ENCODE measurements at regions of chr1 and their contacts with region 1.

Region 1: DNA sequence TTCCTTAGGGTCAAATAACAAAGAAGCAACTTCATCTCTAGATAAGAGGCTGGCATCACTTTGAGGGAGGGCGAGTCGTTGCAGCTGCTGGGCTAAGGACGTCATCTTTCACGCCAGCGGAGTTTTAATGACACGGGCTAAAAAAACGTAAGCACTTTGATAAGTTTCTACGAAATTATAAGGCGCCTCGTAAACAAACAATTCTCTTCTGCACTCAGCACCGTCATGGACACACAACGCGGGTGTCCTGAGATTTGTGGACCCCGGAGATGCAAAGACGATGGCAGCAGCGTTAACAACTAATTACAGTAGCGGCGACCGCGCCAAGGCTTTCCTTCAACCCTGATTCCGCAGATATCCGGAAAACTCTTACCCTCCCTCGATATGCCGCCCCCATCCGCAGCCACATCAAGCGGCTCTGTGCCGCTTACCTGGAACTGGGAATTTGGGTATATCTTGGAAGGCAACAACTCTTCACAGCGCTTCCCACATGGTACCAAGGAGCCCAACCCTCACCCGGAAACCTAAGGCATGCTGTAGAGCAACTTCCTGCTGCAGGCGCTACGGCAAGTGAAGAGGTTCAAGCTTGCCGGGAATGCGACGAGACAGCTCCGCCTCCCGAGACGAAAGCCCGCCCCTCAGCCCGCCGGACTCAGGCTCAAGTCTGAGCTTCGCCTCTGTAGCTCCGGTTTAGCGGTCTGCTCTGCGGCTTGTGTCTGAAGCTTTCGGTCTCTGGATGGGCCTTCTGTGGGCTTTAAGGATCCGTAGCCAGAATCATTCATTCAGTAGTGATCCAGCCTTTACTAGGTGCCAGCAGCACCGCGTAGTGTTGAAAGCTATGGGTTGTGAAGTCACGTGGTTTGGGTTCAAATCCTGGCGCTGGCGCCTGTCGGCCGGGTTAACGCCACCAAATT is at the start of gene HEATR1:
- DNase-seq: peak; percentile 99
- H3K4me3 Mint-ChIP-seq: peak within 1 kb of the TSS; percentile 81
- H3K27ac Mint-ChIP-seq: peak within 1 kb of the TSS; percentile 87
- H3K4me1 Mint-ChIP-seq: peaks cover 14% of the 10 kb centered on the region
- H3K27me3 Mint-ChIP-seq: peaks cover 2% of the 10 kb centered on the region
- CTCF ChIP-seq: no peak
- total RNA-seq, gene HEATR1: 90.6 and 128 TPM in 2 replicates

Region 2: GRCh38 chr1:236103646-236104218 is 500.5 kb before region 1 on chr1:
- CTCF ChIA-PET with region 1: interaction called, 5 read pairs
- POLR2A ChIA-PET with region 1: no interaction called
- intact Hi-C with region 1: loop called (anchors 10 kb)
- DNase-seq: peak; percentile 82
- H3K4me3 Mint-ChIP-seq: no peak overlapping the region
- H3K27ac Mint-ChIP-seq: no peak overlapping the region
- H3K4me1 Mint-ChIP-seq: peaks cover 7% of the 10 kb centered on the region
- H3K27me3 Mint-ChIP-seq: no peaks in the 10 kb centered on the region
- CTCF ChIP-seq: peak; percentile 99

Region 3: DNA sequence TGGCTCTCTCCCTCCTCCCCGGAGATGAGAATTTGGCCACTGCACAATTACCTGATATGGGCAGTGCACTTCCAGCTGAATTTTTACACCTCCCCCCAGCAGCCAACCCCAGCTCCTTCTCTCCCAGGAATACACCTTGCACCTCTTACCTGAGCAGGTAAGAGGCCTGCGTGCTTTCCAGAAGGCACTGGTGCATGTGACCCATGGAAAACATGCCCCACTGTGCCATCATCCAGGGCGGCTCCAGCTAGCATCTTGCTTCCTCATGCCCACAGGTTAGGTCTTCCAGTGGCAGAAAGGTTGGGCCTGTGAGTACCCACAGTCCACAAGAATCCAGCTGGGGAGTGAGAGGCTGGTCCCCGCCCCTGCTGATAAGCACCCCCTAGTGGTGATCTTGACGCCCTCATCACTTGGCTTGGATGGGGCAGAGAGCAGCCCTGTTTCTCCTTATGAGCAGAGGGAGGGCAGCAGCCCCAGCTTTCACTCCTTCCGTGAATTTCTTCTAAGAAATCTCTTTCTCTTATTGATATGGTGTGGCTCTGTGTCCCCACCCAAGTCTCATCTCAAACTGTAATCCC is 152.4 kb before region 1 on chr1:
- CTCF ChIA-PET with region 1: no interaction called
- POLR2A ChIA-PET with region 1: no interaction called
- intact Hi-C with region 1: no loop called
- DNase-seq: peak; percentile 46
- H3K4me3 Mint-ChIP-seq: no peak overlapping the region
- H3K27ac Mint-ChIP-seq: no peak overlapping the region
- H3K4me1 Mint-ChIP-seq: no peaks in the 10 kb centered on the region
- H3K27me3 Mint-ChIP-seq: no peaks in the 10 kb centered on the region
- CTCF ChIP-seq: peak; percentile 42

Region 4: GRCh38 chr1:236636017-236636416 is 31.8 kb after region 1 on chr1:
- CTCF ChIA-PET with region 1: interaction called, 10 read pairs
- POLR2A ChIA-PET with region 1: interaction called, 3 read pairs
- intact Hi-C with region 1: no loop called
- DNase-seq: no peak
- H3K4me3 Mint-ChIP-seq: no peak overlapping the region
- H3K27ac Mint-ChIP-seq: no peak overlapping the region
- H3K4me1 Mint-ChIP-seq: no peaks in the 10 kb centered on the region
- H3K27me3 Mint-ChIP-seq: peaks cover 37% of the 10 kb centered on the region
- CTCF ChIP-seq: no peak

Region 5: DNA sequence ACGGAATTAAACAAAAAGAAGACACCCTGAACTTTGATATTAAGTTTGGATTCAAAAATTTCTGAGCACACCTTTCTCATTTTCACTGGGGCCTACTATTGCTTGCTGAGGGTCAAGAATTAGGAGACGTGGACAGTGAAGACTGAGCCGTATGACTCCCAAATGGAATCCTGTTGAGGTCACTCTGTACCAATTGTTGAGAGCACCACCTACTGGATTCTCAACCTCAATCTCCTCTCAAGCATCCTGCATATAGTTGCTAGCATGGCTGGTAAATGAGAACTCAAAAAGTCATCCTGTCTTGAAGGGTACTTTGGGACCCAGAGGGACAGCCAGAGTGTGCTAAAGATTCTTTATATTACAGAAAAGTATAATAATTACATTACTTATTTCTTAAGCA is 170.7 kb after region 1 on chr1:
- CTCF ChIA-PET with region 1: interaction called, 4 read pairs
- POLR2A ChIA-PET with region 1: no interaction called
- intact Hi-C with region 1: loop called (anchors 1 kb)
- DNase-seq: peak; percentile 60
- H3K4me3 Mint-ChIP-seq: no peak overlapping the region
- H3K27ac Mint-ChIP-seq: no peak overlapping the region
- H3K4me1 Mint-ChIP-seq: no peaks in the 10 kb centered on the region
- H3K27me3 Mint-ChIP-seq: peaks cover 17% of the 10 kb centered on the region
- CTCF ChIP-seq: peak; percentile 19

Region 6: DNA sequence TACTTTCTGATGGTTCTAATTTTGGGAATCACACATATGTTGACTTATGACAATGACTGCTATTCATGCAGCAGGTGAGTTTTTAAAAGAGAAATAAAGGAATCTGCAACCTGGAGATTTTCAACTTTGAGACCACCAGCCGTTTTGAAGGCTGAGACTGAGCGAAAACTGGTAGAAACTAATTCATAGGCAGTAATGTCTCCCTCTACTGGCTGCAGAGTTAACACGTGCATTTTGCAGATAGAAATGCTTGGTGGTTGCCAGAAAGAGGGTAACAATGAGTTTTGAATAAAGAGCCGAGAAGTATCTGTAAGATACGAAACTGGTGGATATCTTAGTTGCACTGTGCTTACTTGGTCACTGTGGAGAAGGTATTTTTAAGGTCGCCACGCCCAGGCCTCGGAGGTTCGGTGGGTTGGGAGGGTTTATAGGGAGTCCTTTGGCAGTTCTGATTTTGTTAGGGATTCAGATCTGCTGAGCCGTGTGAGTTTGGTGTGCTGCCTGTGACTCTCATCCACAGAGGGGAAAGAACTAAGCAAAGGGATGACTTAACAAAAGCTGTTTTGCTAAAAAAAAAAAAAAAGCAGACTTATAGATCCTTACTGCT is 520.7 kb after region 1 on chr1:
- CTCF ChIA-PET with region 1: interaction called, 3 read pairs
- POLR2A ChIA-PET with region 1: no interaction called
- intact Hi-C with region 1: loop called (anchors 10 kb)
- DNase-seq: peak; percentile 65
- H3K4me3 Mint-ChIP-seq: no peak overlapping the region
- H3K27ac Mint-ChIP-seq: no peak overlapping the region
- H3K4me1 Mint-ChIP-seq: no peaks in the 10 kb centered on the region
- H3K27me3 Mint-ChIP-seq: peaks cover 13% of the 10 kb centered on the region
- CTCF ChIP-seq: peak; percentile 80

Region 7: GRCh38 chr1:237799762-237800474 is 1195.7 kb after region 1 on chr1:
- CTCF ChIA-PET with region 1: interaction called, 3 read pairs
- POLR2A ChIA-PET with region 1: interaction called, 3 read pairs
- intact Hi-C with region 1: loop called (anchors 1 kb)
- DNase-seq: peak; percentile 96
- H3K4me3 Mint-ChIP-seq: no peak overlapping the region
- H3K27ac Mint-ChIP-seq: no peak overlapping the region
- H3K4me1 Mint-ChIP-seq: no peaks in the 10 kb centered on the region
- H3K27me3 Mint-ChIP-seq: no peaks in the 10 kb centered on the region
- CTCF ChIP-seq: peak; percentile 76

Measured in MCF 10A (cell line).